ENCODE measurements at regions of chr11 and their contacts with region 1.

Region 1: GRCh38 chr11:118659314-118659952 is 20.0 kb downstream of the TREH start:
- DNase-seq: peak; percentile 91
- H3K4me3 Mint-ChIP-seq: no peak overlapping the region
- H3K27ac Mint-ChIP-seq: no peak overlapping the region
- H3K4me1 Mint-ChIP-seq: no peaks in the 10 kb centered on the region
- H3K27me3 Mint-ChIP-seq: no peaks in the 10 kb centered on the region

Region 2: DNA sequence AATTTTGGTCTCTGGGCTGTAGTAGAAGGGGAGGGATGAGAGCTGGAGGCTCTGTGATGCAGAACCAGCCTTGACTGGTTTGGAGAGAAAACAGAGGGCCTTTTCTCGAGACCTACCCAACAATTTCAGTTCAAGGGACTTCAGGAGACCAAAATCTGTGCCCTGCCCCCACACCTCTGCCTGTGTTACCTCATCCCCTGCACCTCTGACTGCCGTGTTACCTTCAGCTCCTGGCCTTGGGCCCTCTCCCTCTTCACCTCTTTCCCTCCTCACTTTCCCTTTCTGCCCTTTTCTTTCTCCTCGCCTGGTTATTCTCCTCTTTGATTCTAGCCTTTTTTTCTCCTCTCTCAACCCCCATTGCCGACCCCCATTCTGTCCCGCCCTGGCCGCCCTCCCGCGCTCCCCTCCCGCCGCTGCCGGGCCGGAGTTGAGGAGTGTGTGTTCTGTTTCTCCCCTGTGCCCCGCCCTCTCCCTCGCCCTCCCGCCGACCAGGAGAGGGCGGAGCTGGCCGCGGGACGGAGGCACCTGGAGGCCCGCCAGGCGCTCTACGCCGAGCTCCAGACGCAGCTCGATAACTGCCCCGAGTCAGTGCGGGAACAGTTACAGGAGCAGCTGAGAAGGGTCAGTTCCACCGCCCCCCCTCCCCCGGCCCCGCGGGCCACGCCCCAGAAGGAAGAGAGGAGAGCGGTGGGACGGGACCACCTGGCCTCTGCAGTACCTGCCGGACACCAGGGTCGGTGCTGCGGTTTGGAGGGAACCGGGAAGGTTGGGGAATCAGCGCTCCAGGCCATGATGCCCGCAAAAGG is 24.8 kb before region 1 on chr11:
- CTCF ChIA-PET with region 1: interaction called, 24 read pairs
- POLR2A ChIA-PET with region 1: no interaction called
- DNase-seq: no peak
- H3K4me3 Mint-ChIP-seq: no peak overlapping the region
- H3K27ac Mint-ChIP-seq: no peak overlapping the region
- H3K4me1 Mint-ChIP-seq: peaks cover 2% of the 10 kb centered on the region
- H3K27me3 Mint-ChIP-seq: no peaks in the 10 kb centered on the region

Measured in activated CD4-positive, alpha-beta T cell treated with anti-CD3 and anti-CD28 coated beads, Interleukin-2, amount 10 ng/mL, durations not matched to agents 7 days and 5 days (primary cell).